Mammary epithelial cell (primary cell): ENCODE measurements at regions of chr6 and their contacts with region 1.

Region 1: GRCh38 chr6:79878142-79878753 is 69.1 kb downstream of the ELOVL4 start:
- DNase-seq: peak; percentile 45
- H3K4me3 ChIP-seq: no peak overlapping the region
- H3K27ac ChIP-seq: peak overlapping the region; percentile 59
- H3K4me1 ChIP-seq: peaks cover 33% of the 10 kb centered on the region
- H3K27me3 ChIP-seq: no peaks in the 10 kb centered on the region
- CTCF ChIP-seq: no peak

Region 2: GRCh38 chr6:79257381-79258205 is 620.7 kb before region 1 on chr6:
- CTCF ChIA-PET with region 1: no interaction called
- dilution Hi-C with region 1: no loop called
- in situ Hi-C with region 1: no loop called
- intact Hi-C with region 1: loop called (anchors 5 kb)
- DNase-seq: peak; percentile 58
- H3K4me3 ChIP-seq: no peak overlapping the region
- H3K27ac ChIP-seq: no peak overlapping the region
- H3K4me1 ChIP-seq: no peaks in the 10 kb centered on the region
- H3K27me3 ChIP-seq: no peaks in the 10 kb centered on the region
- CTCF ChIP-seq: no peak

Region 3: DNA sequence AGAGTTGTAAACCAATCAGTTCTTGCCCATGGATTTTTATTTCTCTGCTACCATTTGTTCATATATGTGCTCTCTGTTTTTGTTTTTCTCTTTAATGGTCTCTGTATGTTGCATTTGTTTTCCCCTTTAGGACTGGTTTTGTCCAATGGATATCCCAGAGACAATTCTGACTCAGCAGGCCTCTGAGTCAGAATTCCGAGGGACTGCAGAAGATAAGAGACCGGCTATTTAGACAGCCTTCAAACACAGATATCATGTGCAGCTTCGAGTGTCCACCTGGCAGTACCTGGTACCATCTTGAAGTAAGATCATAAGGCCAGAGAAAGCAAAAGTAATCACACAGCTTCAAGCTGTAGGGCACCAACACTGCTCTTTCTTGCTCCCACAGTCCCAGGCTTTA is 56.4 kb before region 1 on chr6:
- CTCF ChIA-PET with region 1: no interaction called
- dilution Hi-C with region 1: no loop called
- in situ Hi-C with region 1: no loop called
- intact Hi-C with region 1: no loop called
- DNase-seq: peak; percentile 13
- H3K4me3 ChIP-seq: no peak overlapping the region
- H3K27ac ChIP-seq: no peak overlapping the region
- H3K4me1 ChIP-seq: no peaks in the 10 kb centered on the region
- H3K27me3 ChIP-seq: no peaks in the 10 kb centered on the region
- CTCF ChIP-seq: no peak

Region 4: DNA sequence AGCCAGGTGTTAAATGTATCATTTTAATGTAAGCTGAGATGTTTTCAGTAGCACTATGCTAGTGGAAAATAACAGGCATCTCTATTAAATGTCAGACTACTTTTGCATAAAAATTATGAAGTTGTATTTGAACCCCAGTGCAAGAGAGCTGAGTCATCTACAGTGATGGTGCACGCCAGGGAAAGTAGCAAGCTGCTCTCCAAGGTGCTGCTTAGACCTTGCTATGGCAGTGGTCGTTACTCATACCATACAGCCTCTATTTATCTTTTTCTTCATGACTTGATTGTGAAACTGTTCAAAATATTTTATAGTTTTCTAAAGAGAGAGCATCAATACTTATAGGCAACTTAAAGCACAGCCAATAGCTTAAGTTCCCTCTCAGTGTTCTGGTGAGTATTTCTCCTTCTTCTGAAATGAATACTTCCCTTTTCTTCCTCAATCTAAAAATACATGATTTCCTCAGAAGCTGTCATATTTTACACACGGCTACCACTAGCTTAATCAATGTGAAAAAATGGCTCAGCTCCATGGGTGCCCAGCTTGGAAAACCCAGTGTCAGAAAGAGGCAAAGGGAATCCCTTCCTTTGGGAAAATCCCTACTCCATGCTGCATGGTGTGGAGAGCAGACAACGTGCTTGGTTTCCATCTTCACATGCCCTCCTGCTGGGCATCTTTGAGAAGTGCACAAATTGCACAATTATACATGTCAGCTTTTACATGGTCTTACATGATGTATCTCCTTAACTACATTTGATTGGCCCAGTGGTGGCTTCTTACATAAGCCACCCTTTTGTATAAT is 36.5 kb before region 1 on chr6:
- CTCF ChIA-PET with region 1: no interaction called
- dilution Hi-C with region 1: no loop called
- in situ Hi-C with region 1: no loop called
- intact Hi-C with region 1: no loop called
- DNase-seq: no peak
- H3K4me3 ChIP-seq: no peak overlapping the region
- H3K27ac ChIP-seq: no peak overlapping the region
- H3K4me1 ChIP-seq: no peaks in the 10 kb centered on the region
- H3K27me3 ChIP-seq: peaks cover 4% of the 10 kb centered on the region
- CTCF ChIP-seq: no peak

Region 5: DNA sequence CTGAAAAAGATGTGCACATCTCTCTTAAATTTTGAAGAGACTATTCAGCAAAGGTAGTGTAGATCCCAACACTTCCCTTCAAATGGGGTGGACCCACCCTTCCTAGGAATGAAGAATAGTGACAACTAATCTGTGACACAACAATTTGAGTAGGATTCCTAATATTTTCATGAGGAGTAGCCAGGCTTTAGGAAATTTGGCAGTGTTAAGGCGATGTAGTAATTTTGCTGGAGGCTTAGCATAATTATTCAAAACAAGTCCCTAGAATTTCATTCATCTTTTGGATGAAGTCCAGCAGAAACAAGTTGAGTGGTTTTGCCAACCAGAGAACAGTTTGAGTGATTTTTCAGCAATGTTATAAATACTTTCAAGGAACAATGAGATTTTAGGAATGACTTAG is 16.7 kb after region 1 on chr6:
- CTCF ChIA-PET with region 1: no interaction called
- dilution Hi-C with region 1: no loop called
- in situ Hi-C with region 1: no loop called
- intact Hi-C with region 1: loop called (anchors 2 kb)
- DNase-seq: peak; percentile 58
- H3K4me3 ChIP-seq: no peak overlapping the region
- H3K27ac ChIP-seq: peak overlapping the region; percentile 70
- H3K4me1 ChIP-seq: peaks cover 22% of the 10 kb centered on the region
- H3K27me3 ChIP-seq: no peaks in the 10 kb centered on the region
- CTCF ChIP-seq: no peak

Region 6: GRCh38 chr6:79949233-79949632 is 71.0 kb after region 1 on chr6:
- CTCF ChIA-PET with region 1: no interaction called
- dilution Hi-C with region 1: no loop called
- in situ Hi-C with region 1: no loop called
- intact Hi-C with region 1: loop called (anchors 1 kb)
- DNase-seq: peak; percentile 56
- H3K4me3 ChIP-seq: no peak overlapping the region
- H3K27ac ChIP-seq: no peak overlapping the region
- H3K4me1 ChIP-seq: peaks cover 18% of the 10 kb centered on the region
- H3K27me3 ChIP-seq: no peaks in the 10 kb centered on the region
- CTCF ChIP-seq: peak; percentile 23 to 51

Region 7: DNA sequence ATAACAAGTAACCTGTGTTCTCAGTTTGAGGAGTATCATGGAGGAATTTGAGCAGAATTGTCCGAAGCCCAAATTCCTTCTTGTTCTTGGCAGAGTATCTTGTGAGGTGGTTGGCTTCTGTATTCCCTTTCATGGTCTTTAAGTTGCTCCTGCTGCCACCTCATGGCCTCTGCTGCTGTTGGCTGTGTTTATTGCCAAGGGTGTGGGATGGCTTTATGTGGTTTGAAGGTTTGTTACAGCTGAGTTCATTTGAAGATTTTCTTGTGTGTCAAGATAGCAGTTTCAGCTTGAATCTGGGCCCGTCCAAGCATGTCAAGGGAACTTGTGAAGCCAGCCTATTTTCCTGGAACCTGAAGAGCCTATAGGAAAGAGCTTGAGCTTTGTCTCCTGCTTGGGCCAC is 106.0 kb after region 1 on chr6:
- CTCF ChIA-PET with region 1: no interaction called
- dilution Hi-C with region 1: no loop called
- in situ Hi-C with region 1: no loop called
- intact Hi-C with region 1: loop called (anchors 1 kb)
- DNase-seq: peak; percentile 71
- H3K4me3 ChIP-seq: no peak overlapping the region
- H3K27ac ChIP-seq: no peak overlapping the region
- H3K4me1 ChIP-seq: peaks cover 4% of the 10 kb centered on the region
- H3K27me3 ChIP-seq: no peaks in the 10 kb centered on the region
- CTCF ChIP-seq: peak; percentile 17 to 60

Region 8: DNA sequence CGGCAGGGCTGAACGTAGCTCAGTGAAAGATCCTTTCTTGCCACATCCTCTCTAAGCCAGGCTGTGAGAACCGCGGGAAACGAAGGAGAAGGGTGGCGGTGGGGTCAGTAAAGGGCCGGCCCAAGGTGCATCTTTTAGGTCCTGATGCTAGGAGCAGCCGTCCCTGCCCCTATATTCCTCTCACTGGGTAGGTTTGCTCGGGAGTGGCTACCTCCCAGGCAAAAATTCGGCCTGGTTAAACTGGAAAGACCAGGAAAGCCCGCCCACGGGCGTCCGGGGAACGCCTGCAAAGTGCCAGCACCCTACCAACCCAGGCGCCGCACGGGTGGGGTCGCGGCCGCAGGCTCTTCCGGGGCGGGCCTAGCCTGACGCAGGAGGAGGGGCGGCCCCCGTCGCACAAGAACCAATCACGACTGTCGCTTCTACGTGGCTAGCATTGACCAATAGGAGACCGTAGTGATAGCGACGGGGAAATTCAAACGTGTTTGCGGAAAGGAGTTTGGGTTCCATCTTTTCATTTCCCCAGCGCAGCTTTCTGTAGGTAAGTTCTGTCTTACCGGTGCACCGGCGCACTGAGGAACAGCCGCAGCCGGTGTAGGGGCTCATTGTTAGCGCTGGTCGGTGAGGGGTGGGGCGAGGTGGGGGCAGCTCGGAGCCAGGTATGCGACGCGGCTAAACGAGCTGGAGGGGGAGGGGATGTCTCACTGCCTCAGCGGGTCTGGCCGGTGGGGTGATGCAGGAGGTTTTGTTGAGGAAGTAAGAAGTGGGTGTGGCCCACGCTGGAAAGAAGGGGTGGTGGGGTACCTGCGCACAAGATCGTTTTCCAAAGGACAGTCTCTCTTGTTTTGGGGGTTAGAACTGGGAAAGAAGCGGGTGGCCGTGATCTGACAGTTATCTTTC is 126.2 kb after region 1 on chr6 and contains the start of gene TTK:
- CTCF ChIA-PET with region 1: no interaction called
- dilution Hi-C with region 1: no loop called
- in situ Hi-C with region 1: no loop called
- intact Hi-C with region 1: loop called (anchors 2 kb)
- DNase-seq: peak; percentile 96
- H3K4me3 ChIP-seq: peak within 1 kb of the TSS; percentile 54 to 95 (median 76)
- H3K27ac ChIP-seq: peak within 1 kb of the TSS; percentile 71
- H3K4me1 ChIP-seq: peaks cover 9% of the 10 kb centered on the region
- H3K27me3 ChIP-seq: no peaks in the 10 kb centered on the region
- CTCF ChIP-seq: no peak
- total RNA-seq, gene TTK: 1.8 to 15.9 TPM